Stomach (tissue), 19 donors: ENCODE measurements at regions of chr12 and their contacts with region 1.

Region 1: DNA sequence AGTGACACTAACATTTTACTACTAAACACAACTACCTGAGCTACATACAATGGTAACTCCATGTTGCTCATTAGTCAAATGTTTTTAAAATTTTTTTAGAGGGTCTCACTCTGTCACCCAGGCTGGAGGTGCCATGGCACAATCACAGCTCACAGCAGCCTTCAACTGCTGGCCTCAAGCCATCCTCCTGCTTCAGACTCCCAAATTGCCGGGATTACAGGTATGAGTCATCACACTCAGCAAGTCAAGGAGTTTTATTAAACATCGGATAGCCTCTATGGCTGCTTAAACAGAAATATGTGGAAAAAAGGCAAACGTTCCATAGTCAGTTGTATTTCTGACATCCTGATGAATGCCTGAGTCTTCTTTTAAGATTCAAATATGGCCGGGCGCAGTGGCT is 11.1 kb upstream of the NPFF start:
- DNase-seq: no peak
- H3K4me3 ChIP-seq: no peak overlapping the region
- H3K27ac ChIP-seq: no peak overlapping the region
- H3K4me1 ChIP-seq: no peaks in the 10 kb centered on the region
- H3K27me3 ChIP-seq: no peaks in the 10 kb centered on the region
- CTCF ChIP-seq: no peak
- EP300 ChIP-seq: no peak
- POLR2A ChIP-seq: no peak

Region 2: GRCh38 chr12:53465679-53466078 is 52.7 kb before region 1 on chr12:
- intact Hi-C with region 1: loop called (anchors 10 kb)
- DNase-seq: no peak
- H3K4me3 ChIP-seq: no peak overlapping the region
- H3K27ac ChIP-seq: no peak overlapping the region
- H3K4me1 ChIP-seq: peaks cover 12 to 74% (median 41%) of the 10 kb centered on the region in 4 donors
- H3K27me3 ChIP-seq: no peaks in the 10 kb centered on the region
- CTCF ChIP-seq: no peak
- EP300 ChIP-seq: no peak
- POLR2A ChIP-seq: no peak